ENCODE measurements at regions of chr9 and their contacts with region 1.

Region 1: DNA sequence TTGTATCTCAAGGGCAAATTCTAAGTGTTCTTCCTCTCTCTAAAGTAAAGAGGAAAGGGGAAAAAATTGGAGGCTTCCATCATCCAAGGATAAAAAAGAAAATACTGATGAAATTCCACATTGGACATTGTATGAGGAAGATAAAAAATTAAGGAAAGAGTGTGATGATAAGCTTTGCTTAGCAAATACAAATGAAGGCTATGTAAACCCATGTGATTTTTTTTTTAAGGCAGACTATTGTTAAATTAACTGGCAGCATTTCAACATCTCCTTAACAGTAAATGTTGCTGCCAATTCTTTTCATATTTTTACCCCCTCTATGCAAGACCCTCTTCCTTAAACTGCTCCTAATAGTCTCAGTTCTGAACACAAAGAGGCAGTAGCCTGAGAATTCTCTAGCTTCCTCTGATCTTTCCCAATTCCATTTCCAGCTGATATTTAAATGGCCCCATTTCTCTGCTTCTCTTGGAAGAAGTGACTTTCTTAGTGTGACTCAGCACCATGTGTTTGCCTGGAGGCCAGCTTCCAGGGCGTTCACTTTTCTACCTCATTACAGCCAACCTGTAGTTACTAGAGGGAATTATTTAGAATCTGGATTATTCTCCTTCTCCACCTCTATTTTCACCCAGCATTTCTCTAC is 159.7 kb downstream of the TLE1 start:
- DNase-seq: peak; percentile 27
- H3K4me3 ChIP-seq: no peak overlapping the region
- H3K27me3 ChIP-seq: no peaks in the 10 kb centered on the region
- CTCF ChIP-seq: no peak

Region 2: DNA sequence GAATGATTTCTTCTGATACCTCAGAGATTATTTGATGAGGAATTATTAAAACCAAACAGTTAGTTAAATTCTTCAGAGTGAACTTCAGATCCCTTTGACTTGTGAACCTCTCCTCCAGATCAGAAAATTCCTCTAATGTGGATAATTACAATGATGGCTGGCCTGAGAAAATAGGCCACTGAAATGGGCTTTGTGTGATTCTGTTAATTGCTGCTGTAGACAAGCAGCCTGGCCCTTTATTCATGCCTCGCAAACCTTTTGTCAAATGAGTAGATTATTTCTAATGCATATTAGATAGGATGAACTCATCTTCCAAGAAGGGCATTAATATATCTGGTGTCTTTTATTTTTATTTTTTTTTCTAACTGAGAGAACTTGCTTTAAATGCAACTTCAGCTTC is 1102.7 kb before region 1 on chr9:
- CTCF ChIA-PET with region 1: no interaction called
- POLR2A ChIA-PET with region 1: no interaction called
- DNase-seq: no peak
- H3K4me3 ChIP-seq: no peak overlapping the region
- H3K27me3 ChIP-seq: no peaks in the 10 kb centered on the region
- CTCF ChIP-seq: no peak

Region 3: GRCh38 chr9:81689343-81690190 is 159.9 kb after region 1 on chr9 and contains the start of gene TLE1:
- CTCF ChIA-PET with region 1: interaction called, 3 read pairs
- POLR2A ChIA-PET with region 1: interaction called, 10 read pairs
- DNase-seq: peak; percentile 96
- H3K4me3 ChIP-seq: peak within 1 kb of the TSS; percentile 69
- H3K27me3 ChIP-seq: peaks cover 19% of the 10 kb centered on the region
- CTCF ChIP-seq: 0 out of 2 replicates have a peak, but pooled peaks have one; percentile 12
- polyA plus RNA-seq, gene TLE1: 8.8 and 9.6 TPM in 2 replicates

Region 4: DNA sequence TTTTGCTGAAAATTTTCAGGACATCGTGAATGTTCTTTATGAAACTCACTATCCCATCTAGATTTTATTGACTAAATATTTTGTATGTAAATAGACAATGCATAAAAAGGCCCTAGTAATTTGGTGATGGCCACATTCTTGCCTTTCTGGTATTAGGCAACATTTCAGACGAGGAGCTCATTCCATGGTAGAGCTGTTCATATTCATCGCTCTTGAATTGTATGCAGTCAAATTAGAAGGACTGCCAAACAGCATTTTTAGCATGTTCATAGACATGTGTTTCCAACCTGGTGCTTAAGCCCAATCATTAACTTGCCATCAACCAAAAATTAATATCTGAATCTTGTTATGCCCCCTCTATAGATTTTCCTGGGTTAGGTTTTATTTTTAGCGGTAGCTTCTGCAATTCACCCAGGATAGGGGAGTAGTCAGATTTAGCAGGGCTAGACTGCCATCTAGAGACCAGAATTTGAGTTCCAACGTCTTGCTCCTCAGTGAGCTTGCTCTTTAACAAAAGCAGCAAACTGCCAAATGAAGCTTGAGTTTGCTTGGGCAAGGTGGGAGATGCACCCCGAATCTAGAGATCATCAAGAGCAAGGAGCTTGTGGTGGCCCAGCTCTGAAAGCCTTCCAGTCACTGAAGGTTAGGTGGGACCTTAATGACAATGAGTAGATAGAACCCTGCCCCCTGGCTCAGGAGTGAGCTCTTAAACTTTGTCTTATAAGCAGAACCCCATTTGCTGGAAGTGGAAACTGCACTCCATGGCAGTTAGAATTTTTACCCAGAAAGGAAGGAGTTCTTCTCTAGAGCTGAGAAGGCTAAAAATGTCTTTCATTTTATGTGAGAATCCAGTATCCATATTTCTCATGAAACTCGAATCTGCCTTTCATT is 1077.1 kb after region 1 on chr9:
- CTCF ChIA-PET with region 1: interaction called, 17 read pairs
- POLR2A ChIA-PET with region 1: no interaction called
- DNase-seq: peak; percentile 11
- H3K4me3 ChIP-seq: no peak overlapping the region
- H3K27me3 ChIP-seq: peaks cover 1% of the 10 kb centered on the region; the same call in 1 of the 2 replicates
- CTCF ChIP-seq: peak; percentile 61

Measured in BJ (cell line).